ENCODE measurements at regions of chr11 and their contacts with region 1.

Region 1: GRCh38 chr11:8225589-8226036 is 38.1 kb downstream of the LMO1 start:
- DNase-seq: peak; percentile 39
- ATAC-seq: peak; percentile 86
- H3K4me3 ChIP-seq: no peak overlapping the region
- H3K27ac ChIP-seq: no peak overlapping the region
- H3K4me1 ChIP-seq: no peaks in the 10 kb centered on the region
- H3K27me3 ChIP-seq: peaks cover 0 to 29% of the 10 kb centered on the region in 2 experiments; a peak in 4 of 5 replicates
- CTCF ChIP-seq: peak; percentile 92
- EP300 ChIP-seq: no peak
- POLR2A ChIP-seq: no peak
- RAD21 ChIP-seq: peak; percentile 79

Region 2: GRCh38 chr11:8263769-8264410 is 38.3 kb after region 1 on chr11 and contains the start of gene LMO1:
- CTCF ChIA-PET with region 1: interaction called, 12 read pairs
- POLR2A ChIA-PET with region 1: no interaction called
- in situ Hi-C with region 1: loop called (anchors 5 kb)
- intact Hi-C with region 1: loop called (anchors 1 kb)
- DNase-seq: peak; percentile 41
- ATAC-seq: peak; percentile 80
- H3K4me3 ChIP-seq: peak within 1 kb of the TSS in 1 of 3 experiments; percentile 23; a peak in 1 of 6 replicates
- H3K27ac ChIP-seq: no peak within 1 kb of the TSS
- H3K4me1 ChIP-seq: no peaks in the 10 kb centered on the region
- H3K27me3 ChIP-seq: peaks cover 12 to 85% of the 10 kb centered on the region in 2 experiments
- CTCF ChIP-seq: peak; percentile 85
- EP300 ChIP-seq: no peak
- POLR2A ChIP-seq: no peak
- RAD21 ChIP-seq: no peak
- total RNA-seq, gene LMO1: not detected in 2 replicates

Measured in HepG2 (cell line).